Left colon (tissue), 2 donors: ENCODE measurements at regions of chr1 and their contacts with region 1.

Region 1: DNA sequence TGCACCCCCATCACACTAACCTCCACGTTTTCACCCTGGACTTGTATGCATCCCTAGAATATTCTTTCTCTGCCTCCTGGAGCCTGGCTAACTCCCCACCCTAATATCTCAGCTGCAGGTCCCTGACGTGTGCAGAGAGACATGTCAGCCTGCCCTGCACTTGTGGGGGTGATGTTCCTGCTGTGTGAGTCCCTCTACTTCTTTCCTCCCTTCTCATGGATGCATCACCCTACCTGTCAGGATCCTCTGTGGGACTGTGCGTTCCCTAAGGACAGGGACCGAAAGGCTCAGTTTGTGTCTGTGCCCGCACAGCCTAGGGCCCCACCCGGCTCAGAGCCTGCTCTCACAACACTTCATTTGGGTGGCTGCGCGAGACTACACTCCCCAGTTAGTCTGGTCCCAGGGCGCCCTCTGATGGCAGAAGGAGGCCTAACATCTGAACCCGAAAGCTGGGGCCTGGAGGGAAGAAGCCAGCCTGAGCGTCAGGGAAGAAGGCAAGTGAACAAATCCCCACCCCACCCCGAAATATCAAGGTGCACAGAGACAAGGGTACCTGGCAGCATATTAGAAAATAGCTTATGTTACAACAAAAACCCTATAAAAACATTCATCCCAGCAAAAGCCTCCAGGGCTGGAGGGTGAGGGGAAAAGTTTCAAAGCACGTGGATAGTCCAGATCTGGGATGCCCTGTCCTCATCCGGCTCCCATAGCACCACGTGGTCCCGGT is 3.7 kb downstream of the CD52 start:
- DNase-seq: peak; percentile 89 to 96
- ATAC-seq: peak; percentile 91

Region 2: DNA sequence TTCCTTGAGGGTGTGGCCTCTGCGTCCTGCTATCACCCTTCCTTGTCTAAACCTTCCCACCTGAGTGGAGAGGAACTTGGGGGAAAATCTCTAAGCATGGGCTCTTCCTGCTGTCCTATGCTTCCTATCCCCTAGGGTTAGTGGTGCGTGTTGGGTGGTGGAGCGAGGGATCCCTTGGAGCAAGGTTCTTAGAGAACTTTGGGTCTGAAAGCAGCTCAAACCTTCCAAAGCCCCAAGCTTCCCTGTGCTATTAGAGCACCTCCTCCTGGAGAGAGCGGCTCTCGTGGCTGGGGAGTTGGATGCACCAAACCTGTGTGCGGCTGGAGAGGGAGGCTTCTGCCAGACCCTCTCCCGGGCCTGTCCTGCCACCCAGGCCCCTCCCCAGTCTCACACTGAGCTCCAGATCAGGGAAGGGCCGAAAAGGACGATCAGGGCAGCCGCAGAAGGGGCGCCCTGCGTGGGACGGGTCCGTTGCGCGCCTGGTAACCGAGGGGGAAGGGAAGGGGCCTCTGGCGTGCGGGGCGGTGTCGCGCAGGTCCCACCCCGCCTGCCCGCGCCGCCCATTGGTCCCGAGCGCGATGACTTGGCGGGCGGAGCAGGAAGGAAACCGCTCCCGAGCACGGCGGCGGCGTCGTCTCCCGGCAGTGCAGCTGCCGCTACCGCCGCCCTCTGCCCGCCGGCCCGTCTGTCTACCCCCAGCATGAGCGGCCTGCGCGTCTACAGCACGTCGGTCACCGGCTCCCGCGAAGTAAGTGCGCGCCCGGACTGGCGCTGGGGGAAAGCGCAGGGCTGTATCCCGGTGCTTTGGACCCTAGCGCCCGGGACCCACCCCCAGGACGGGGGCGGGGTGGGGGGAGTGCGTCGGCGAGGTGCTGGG is 41.8 kb before region 1 on chr1 and contains the start of gene SH3BGRL3:
- intact Hi-C with region 1: loop called (anchors 2 to 10 kb)
- DNase-seq: peak; percentile 89 to 93
- ATAC-seq: peak; percentile 63
- total RNA-seq, gene SH3BGRL3: 401 to 409 TPM

Region 3: GRCh38 chr1:26677306-26678115 is 356.0 kb after region 1 on chr1:
- intact Hi-C with region 1: no loop called
- DNase-seq: peak; percentile 91 to 93
- ATAC-seq: peak; percentile 100